Activated T-helper 2 cell treated with anti-CD3 and anti-CD28 coated beads, Interferon-gamma antibody, Interleukin-2, Interleukin-4, amounts not matched to agents 10 μg/mL and 5 μg/mL and 100 μg/mL, durations not matched to agents 14 hours and 24 hours and 36 hours (primary cell): ENCODE measurements at regions of chr7 and their contacts with region 1.

Region 1: DNA sequence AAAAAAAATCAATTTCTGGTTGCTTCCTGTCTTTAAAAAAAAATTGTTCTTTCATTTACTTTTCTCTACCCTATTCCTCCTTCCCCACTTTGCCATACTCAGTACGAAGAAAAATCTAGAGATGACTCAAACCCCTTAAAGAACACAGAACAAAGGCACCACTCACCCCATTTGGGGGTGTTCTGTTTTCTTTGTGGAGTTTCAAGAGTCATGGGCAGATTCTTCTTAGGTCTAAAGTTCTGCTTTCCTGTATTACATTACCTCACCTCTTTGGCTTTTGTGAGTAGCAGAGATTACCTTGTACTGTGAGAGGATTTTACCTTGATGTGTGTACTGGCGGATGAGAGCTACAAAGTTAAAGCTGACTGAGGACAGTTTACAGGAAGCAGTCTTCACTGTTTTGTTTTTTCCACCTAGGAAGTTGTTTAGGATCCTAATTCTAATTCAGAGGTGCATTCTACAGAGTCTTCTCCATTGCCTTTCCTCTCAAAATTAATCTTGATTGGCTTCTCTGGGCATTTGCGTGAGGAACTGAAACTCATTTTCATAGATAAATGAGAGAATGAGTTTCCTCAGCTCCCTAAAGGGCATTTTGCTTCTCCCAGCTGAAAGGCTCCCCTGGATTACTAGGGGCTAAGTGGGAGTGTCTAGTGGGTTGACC is 20.7 kb downstream of the AVL9 start:
- DNase-seq: no peak
- H3K4me3 Mint-ChIP-seq: no peak overlapping the region
- H3K27ac Mint-ChIP-seq: peak overlapping the region; percentile 76
- H3K4me1 Mint-ChIP-seq: peaks cover 40% of the 10 kb centered on the region
- H3K27me3 Mint-ChIP-seq: no peaks in the 10 kb centered on the region

Region 2: GRCh38 chr7:32500922-32501341 is 15.1 kb before region 1 on chr7:
- intact Hi-C with region 1: loop called (anchors 2 kb)
- DNase-seq: no peak
- H3K4me3 Mint-ChIP-seq: peak overlapping the region; percentile 1
- H3K27ac Mint-ChIP-seq: peak overlapping the region; percentile 76
- H3K4me1 Mint-ChIP-seq: peaks cover 44% of the 10 kb centered on the region
- H3K27me3 Mint-ChIP-seq: no peaks in the 10 kb centered on the region